ENCODE measurements at regions of chr3 and their contacts with region 1.

Region 1: DNA sequence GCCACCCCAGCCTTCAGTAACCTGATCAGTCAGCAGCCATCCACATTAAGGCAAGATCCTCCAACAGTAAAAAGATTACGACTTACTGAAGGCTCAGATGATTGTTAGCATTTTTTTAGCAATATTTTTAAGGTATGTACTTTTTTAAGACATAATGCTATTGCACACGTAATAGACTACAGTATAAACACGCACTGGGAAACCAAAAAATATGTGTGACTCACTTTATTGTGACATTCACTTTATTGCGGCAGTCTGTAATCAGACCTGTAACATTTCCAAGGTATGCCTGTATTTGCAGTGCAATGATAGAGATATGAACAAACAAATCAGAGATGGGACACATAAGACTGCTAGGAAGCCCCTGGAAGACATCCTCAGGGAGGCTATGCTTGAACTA is 225.4 kb upstream of the UBE2E1 start:
- DNase-seq: peak; percentile 97
- ATAC-seq: peak; percentile 64
- H3K4me3 ChIP-seq: peak overlapping the region; percentile 16; the same call in 1 of the 2 replicates
- H3K27ac ChIP-seq: peak overlapping the region; percentile 69
- H3K4me1 ChIP-seq: peaks cover 38% of the 10 kb centered on the region
- H3K27me3 ChIP-seq: no peaks in the 10 kb centered on the region
- CTCF ChIP-seq: no peak

Region 2: DNA sequence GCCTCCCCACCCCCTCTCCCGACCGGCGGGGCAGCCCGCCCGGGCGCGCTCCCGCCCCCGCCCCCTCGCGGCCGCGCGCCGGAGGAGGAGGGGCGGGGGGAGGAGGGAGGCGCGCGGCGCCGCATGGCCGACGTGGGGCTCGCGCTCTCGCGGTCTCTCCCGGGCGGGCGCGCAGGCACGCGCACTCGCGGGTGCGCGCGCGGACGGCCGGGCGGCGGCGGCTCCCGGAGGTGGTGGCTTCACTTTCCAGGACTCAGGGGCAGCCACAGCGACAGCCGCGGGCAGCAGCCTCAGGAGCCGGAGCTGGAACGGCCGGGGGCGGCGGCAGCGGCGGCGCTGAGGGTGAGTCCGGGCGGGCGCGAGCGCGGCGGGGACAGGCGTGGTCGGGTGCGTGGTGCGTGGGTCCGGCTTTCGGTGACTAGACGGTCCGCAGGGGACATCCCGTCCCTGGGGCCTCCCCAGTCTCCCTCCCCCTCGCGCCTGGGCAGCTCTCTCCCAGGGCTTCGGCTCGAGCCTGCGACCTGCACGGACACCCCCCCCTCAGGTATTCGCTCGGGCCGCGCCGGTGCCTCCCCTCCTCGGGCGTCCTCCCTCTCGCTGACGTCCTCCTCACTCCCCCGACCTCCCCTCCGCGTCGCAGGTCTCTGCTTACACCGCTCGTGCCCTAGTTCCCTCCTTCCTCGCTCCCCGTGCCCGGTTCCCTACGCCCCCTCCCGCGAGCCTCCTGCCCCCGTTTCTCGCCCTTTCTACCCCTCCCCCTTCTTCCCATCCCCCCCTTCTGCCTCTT is 377.2 kb before region 1 on chr3 and contains the start of gene UBE2E2:
- CTCF ChIA-PET with region 1: no interaction called
- POLR2A ChIA-PET with region 1: no interaction called
- intact Hi-C with region 1: loop called (anchors 5 kb)
- DNase-seq: peak; percentile 82
- ATAC-seq: peak; percentile 72
- H3K4me3 ChIP-seq: peak within 1 kb of the TSS; percentile 100
- H3K27ac ChIP-seq: peak within 1 kb of the TSS; percentile 52
- H3K4me1 ChIP-seq: peaks cover 12% of the 10 kb centered on the region
- H3K27me3 ChIP-seq: no peaks in the 10 kb centered on the region
- CTCF ChIP-seq: no peak
- total RNA-seq, gene UBE2E2: 25.6 and 30.9 TPM in 2 replicates

Region 3: DNA sequence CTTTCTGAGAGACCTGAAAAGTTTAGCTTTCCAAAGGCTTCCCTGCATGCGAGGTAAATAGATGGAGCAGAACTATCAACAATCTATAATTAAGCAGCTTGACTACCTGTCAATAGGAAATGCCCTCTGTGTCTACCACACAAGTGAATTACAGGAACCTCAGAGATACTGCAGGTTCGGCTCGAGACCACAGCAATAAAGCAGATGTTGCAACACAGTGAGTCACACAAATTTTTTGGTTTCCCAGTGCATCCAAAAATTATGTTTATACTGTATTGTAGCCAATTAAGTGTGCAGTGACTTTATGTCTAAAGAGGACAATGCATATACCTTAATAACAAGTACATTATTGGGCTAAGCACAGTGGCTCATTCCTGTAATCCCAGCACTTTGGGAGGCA is 125.3 kb before region 1 on chr3:
- CTCF ChIA-PET with region 1: no interaction called
- POLR2A ChIA-PET with region 1: no interaction called
- intact Hi-C with region 1: loop called (anchors 1 kb)
- DNase-seq: peak; percentile 95
- ATAC-seq: peak; percentile 95
- H3K4me3 ChIP-seq: no peak overlapping the region
- H3K27ac ChIP-seq: no peak overlapping the region
- H3K4me1 ChIP-seq: peaks cover 17% of the 10 kb centered on the region
- H3K27me3 ChIP-seq: no peaks in the 10 kb centered on the region
- CTCF ChIP-seq: no peak

Region 4: DNA sequence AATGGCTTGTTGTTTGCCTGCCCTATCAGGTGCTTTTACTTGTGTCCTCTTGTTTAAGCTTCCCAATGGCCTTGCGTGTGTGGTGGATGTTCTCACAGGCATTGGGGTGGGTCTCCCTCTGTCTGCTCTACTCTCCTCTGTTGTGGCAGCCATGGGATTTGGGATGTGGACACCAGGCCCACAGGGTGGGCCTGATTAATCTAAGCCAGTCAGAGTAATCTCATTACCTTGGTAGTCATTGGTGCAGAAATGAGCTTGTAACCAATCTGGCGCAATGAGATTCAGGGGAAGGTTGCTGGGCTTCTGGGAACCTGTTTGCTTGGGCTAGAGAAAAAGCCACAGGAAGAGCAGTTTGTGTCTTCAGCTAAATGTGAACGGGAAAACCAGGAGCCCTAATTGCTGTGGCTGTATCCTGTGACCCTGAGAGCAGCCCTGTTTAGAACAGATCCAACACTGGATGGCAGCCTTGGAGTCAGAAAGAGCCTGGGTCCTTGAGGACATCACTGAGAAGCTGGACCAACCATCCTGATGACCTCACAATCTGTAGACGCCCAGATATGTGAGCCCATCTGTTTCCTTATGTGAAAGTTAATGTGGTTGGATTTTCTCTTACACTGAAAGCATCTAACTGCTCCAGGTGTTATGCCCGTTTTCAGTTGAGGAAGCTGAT is 68.1 kb after region 1 on chr3:
- CTCF ChIA-PET with region 1: no interaction called
- POLR2A ChIA-PET with region 1: no interaction called
- intact Hi-C with region 1: loop called (anchors 1 kb)
- DNase-seq: peak; percentile 32
- ATAC-seq: no peak
- H3K4me3 ChIP-seq: no peak overlapping the region
- H3K27ac ChIP-seq: no peak overlapping the region
- H3K4me1 ChIP-seq: peaks cover 42% of the 10 kb centered on the region
- H3K27me3 ChIP-seq: no peaks in the 10 kb centered on the region
- CTCF ChIP-seq: peak; percentile 44; the same call in 1 of the 2 replicates

Region 5: DNA sequence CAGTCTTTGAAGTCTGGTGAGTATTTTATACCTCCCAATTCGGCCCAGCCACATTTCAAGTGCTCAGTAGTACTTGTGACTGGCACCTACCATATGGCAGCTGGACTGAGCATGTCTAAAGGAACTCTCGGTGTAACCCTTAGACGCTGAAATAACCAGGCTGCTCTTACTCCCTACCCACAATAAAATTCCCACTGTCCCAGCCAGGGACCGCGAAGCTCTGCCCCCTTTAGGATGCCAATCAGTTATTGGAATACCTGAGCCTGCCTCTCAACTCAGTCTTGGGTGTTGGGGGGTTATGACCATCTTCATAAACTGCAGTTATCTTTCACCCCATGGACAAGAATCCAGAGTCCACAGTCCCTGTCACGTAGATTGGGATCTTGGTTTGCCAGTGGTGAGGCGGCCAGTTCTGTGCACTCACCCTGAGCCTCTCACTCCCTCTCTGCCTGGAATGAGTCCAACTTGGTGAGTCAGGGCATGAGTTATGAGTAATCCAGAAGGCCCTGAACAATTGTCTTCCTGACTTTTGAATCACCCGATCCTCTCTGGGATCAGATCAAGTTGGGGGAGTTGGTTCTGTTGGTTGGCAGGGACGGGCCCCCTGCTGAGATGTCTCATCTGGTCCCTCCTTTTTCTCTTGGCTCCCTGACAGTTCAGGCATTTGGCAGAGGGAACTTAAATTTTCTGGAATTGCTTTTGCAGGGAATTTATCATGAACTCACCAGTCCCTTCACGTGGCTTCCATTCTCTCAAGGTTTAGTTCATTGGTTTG is 105.3 kb after region 1 on chr3:
- CTCF ChIA-PET with region 1: no interaction called
- POLR2A ChIA-PET with region 1: no interaction called
- intact Hi-C with region 1: loop called (anchors 5 kb)
- DNase-seq: peak; percentile 100
- ATAC-seq: peak; percentile 93
- H3K4me3 ChIP-seq: no peak overlapping the region
- H3K27ac ChIP-seq: peak overlapping the region; percentile 85
- H3K4me1 ChIP-seq: peaks cover 26% of the 10 kb centered on the region
- H3K27me3 ChIP-seq: no peaks in the 10 kb centered on the region
- CTCF ChIP-seq: no peak

Measured in PC-3 (cell line).